ENCODE measurements at regions of chr1 and their contacts with region 1.

Region 1: DNA sequence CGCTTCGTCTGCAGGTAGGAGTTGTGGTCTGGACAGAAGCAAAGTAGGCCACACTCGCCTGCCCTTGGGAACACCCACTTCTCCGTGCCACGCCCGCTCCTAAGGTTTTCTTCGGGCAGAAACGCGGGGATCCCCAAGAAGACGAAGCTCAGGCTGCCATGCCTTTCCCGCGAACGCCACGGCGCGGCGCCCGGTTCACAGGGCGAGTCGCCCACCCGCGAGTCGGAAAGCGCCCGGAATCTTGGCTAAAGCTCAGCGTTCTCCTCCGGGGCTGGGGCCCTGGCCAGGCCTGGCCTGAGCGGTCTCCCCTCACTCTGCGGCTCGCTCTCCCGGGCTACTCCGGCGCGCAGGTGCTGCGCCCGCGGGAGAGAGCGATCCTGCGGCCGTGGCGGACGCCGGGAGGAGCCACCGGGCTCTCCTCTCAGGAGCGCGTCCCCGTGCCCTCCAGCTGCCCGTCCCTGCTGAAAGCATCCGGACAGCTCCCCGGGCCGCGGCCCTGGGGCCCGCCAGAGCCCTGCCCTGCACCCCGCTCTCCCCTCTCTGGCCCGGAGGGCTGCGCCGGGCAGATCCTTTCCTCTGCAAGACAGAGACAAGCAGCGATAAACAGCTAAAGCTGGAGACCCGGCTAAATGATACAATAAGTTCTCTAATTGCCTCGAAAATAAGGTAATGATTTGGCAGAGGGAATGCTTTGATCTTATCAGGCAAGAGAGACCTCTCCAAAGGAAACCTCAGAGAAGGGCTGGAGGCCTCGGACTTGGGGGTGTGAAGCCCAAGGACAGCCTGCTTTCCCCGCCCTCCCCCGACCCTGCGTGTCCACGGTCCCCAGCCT is 6.7 kb upstream of the WNT2B start:
- DNase-seq: peak; percentile 78
- H3K4me3 ChIP-seq: peak overlapping the region; percentile 55
- H3K27ac ChIP-seq: no peak overlapping the region
- H3K4me1 ChIP-seq: no peaks in the 10 kb centered on the region
- H3K27me3 ChIP-seq: no peaks in the 10 kb centered on the region
- CTCF ChIP-seq: peak; percentile 75

Region 2: DNA sequence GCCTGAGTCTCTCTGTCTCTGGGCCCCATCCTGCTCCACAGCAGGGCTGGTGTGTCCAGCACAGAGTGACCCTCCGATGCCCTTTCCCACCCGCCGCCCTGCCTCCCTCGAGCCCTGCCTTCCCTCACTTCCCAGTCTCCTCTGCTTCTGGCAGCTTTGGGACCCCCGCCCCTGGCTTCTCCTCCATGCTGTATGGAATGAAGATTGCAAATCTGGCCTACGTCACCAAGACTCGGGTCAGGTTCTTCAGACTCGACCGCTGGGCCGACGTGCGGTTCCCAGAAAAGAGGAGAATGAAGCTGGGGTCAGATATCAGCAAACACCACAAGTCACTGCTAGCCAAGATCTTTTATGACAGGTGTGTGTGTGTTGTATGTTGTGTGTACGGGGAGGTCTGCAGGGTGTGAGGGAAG is 186.8 kb after region 1 on chr1:
- CTCF ChIA-PET with region 1: interaction called, 10 read pairs
- POLR2A ChIA-PET with region 1: no interaction called
- intact Hi-C with region 1: no loop called
- DNase-seq: no peak
- H3K4me3 ChIP-seq: no peak overlapping the region
- H3K27ac ChIP-seq: no peak overlapping the region
- H3K4me1 ChIP-seq: no peaks in the 10 kb centered on the region
- H3K27me3 ChIP-seq: no peaks in the 10 kb centered on the region
- CTCF ChIP-seq: no peak